Ascending aorta (tissue), 2 donors: ENCODE measurements at regions of chr19 and their contacts with region 1.

Region 1: DNA sequence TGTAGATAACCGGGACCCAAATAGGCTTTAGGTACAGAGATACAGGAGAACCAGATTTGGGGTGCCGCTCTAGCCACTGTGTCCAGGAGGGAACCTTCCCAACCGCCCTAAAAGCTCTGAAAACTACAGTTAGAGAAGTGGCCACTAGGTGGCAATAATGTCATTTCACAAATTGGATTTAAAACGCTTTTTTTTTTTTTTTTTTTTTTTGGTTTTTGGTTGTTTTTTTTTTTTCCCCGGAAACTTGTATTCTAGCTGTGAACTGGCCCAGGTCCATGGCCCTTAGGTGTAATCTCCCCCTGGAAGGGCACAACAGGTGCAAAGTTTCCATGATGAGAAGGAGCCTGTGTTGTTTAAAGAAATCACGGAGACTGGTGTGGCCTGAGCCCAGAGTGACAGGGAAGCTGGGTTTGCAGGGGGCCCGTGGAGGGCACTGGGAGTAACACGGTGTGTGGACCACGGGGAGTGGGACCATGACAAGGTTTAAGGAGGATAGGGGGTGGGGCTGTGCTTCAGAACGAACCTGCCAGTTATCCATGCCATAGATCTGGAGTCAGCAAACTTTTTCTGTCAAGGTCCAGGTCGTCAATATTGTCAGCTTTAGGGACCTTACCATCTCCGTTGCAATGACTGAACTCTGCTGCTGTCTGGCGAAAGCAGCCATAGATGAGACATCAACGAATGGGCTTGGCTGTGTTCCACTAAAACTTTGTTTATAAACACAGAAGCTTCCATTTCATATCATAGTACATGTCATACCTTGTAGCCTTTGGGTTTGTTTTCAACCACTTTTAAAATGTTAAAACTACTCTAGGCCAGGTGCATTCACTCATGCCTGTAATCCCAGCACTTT is 10.1 kb downstream of the OR1I1 start:
- DNase-seq: no peak
- H3K4me3 ChIP-seq: peak overlapping the region in 1 of 2 donors; percentile 31
- H3K27ac ChIP-seq: no peak overlapping the region
- H3K4me1 ChIP-seq: no peaks in the 10 kb centered on the region
- H3K27me3 ChIP-seq: no peaks in the 10 kb centered on the region
- CTCF ChIP-seq: peak; percentile 30 to 72 (median 58)

Region 2: GRCh38 chr19:15149737-15150136 is 57.6 kb after region 1 on chr19:
- intact Hi-C with region 1: loop called (anchors 1 kb)
- DNase-seq: no peak
- H3K4me3 ChIP-seq: no peak overlapping the region
- H3K27ac ChIP-seq: no peak overlapping the region
- H3K4me1 ChIP-seq: no peaks in the 10 kb centered on the region
- H3K27me3 ChIP-seq: no peaks in the 10 kb centered on the region
- CTCF ChIP-seq: no peak